Prostate gland (tissue), 2 donors: ENCODE measurements at regions of chr5 and their contacts with region 1.

Region 1: GRCh38 chr5:149932445-149933350 is 11.9 kb downstream of the PDE6A start:
- DNase-seq: no peak
- H3K4me3 ChIP-seq: no peak overlapping the region
- H3K27ac ChIP-seq: no peak overlapping the region
- H3K4me1 ChIP-seq: peaks cover 12% of the 10 kb centered on the region
- H3K27me3 ChIP-seq: no peaks in the 10 kb centered on the region
- CTCF ChIP-seq: peak in 1 of 4 experiments; percentile 35
- POLR2A ChIP-seq: no peak

Region 2: GRCh38 chr5:149337736-149338135 is 595.0 kb before region 1 on chr5:
- intact Hi-C with region 1: loop called (anchors 5 kb)
- DNase-seq: no peak
- H3K4me3 ChIP-seq: no peak overlapping the region
- H3K27ac ChIP-seq: no peak overlapping the region
- H3K4me1 ChIP-seq: no peaks in the 10 kb centered on the region
- H3K27me3 ChIP-seq: no peaks in the 10 kb centered on the region
- CTCF ChIP-seq: no peak
- POLR2A ChIP-seq: no peak

Region 3: GRCh38 chr5:149804478-149805450 is 127.9 kb before region 1 on chr5:
- intact Hi-C with region 1: no loop called
- DNase-seq: no peak
- H3K4me3 ChIP-seq: no peak overlapping the region
- H3K27ac ChIP-seq: peak overlapping the region; percentile 62 to 64
- H3K4me1 ChIP-seq: no peaks in the 10 kb centered on the region
- H3K27me3 ChIP-seq: no peaks in the 10 kb centered on the region
- CTCF ChIP-seq: no peak
- POLR2A ChIP-seq: no peak

Region 4: DNA sequence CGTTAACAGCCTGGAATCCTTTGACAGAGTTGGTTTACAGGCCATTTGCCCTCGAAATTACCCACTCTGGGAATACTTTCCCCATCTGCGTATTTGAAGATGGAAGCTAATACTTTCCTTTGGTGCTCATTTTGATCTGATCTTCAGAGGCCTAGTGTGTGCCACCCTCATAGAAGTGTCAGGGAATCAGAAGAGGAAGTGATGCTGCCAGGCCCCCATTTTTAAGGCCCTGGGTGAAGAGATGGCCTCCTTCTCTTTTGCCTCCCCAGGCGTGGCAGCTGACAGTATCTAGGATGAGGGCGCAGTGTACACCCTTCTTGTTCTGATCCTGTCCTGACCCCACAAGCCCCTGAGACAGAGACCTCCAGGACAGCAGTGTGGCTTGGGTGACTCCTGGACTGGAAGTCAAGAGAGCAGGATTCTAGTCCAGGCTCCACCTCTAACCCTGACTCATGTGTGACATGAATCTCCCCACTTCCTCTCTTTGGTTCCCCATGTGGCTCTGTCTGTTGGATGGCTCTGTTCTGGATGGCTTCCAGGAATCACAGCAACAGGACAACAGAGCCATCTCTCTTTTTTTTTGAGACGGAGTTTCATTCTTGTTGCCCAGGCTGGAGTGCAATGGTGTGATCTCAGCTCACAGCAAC is 125.9 kb after region 1 on chr5:
- intact Hi-C with region 1: no loop called
- DNase-seq: no peak
- H3K4me3 ChIP-seq: no peak overlapping the region
- H3K27ac ChIP-seq: no peak overlapping the region
- H3K4me1 ChIP-seq: no peaks in the 10 kb centered on the region
- H3K27me3 ChIP-seq: no peaks in the 10 kb centered on the region
- CTCF ChIP-seq: no peak
- POLR2A ChIP-seq: no peak

Region 5: DNA sequence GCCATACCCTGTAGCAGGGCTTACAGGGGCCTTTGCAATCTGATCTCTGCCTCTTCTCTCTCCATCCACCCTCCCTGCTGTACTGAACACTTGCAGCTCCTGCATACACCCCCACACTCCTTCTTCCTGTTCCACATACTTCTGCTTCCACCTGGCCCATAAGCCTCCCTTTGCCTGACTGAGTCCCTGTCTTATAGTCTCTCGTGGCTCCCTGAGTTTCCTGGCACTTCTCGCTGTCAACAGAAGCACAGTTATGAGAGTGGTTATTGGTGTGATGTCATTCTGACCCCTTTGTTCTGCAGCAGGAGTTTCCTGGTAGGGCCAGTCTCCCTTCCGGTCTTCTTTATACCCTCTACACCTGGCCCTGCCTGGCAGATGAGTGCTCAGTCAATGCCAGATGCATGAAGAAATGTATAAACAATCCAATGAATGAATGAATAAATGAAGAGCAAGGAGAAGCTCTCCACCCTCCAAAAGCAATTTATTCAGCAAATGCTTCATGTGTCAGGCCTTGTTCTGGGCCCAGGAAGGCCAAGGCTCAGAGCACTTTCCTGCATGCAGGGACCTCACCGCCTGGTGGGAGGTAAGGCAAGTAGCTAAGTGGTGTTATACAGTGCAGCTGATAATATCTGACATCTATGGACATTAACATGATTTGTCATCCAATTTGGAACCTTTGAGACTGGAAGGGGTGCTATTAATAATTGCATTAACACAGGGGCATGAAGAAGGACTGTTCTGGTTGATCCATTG is 174.2 kb after region 1 on chr5:
- intact Hi-C with region 1: no loop called
- DNase-seq: no peak
- H3K4me3 ChIP-seq: no peak overlapping the region
- H3K27ac ChIP-seq: no peak overlapping the region
- H3K4me1 ChIP-seq: no peaks in the 10 kb centered on the region
- H3K27me3 ChIP-seq: peaks cover 2% of the 10 kb centered on the region
- CTCF ChIP-seq: no peak
- POLR2A ChIP-seq: no peak

Region 6: GRCh38 chr5:150540615-150541396 is 608.1 kb after region 1 on chr5:
- intact Hi-C with region 1: no loop called
- DNase-seq: peak; percentile 85
- H3K4me3 ChIP-seq: no peak overlapping the region
- H3K27ac ChIP-seq: peak overlapping the region in 1 of 2 donors; percentile 40
- H3K4me1 ChIP-seq: peaks cover 4% of the 10 kb centered on the region
- H3K27me3 ChIP-seq: no peaks in the 10 kb centered on the region
- CTCF ChIP-seq: no peak
- POLR2A ChIP-seq: no peak